Head of caudate nucleus (tissue), 42 donors: ENCODE measurements at regions of chr7 and their contacts with region 1.

Region 1: DNA sequence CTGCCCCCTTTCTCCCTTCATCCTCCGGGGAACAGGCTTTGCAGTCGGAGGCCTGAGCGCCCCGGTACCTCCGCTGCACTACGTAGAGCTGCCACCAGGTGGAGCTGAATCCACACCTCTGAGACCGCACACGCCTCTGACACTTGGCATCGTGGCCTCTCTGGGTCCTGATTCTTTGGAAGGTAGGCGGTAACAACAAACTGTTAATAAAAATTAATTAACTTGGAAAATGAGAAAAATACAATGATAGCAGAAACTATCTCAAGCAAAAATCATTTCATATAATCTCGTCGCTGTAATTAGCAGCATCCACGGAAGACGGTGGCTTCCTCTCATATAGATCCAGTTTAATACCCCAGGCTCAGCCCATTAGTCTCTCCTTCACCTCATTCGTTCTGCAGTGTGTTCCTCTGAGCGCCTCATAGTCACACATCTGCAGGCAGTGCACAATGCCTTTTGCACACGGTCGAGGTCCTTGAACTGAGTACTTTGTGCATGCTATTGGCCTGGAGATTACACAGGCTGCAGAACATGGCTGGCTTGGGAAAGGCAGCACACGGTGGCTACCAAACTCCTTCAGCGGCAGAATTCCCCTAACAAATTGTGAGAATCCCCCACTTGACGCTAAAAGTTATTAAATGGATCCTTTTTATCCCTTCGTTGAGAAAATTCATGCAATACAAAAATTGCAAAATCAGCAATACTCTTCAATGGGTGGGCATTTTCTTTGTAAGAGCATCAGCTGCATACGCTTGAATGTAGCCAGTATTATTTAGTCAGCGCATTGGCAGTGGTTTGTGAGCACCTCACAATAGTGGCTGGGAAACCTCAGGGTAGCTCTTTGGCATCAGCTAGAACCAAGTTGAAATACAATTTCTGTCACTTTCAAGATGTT is 18.7 kb downstream of the OR9A2 start:
- DNase-seq: peak; percentile 53 to 95 (median 87)

Region 2: GRCh38 chr7:142853739-142854371 is 154.4 kb before region 1 on chr7:
- intact Hi-C with region 1: loop called (anchors 10 kb)
- DNase-seq: peak; percentile 60 to 88 (median 73)

Region 3: GRCh38 chr7:142908921-142909890 is 99.0 kb before region 1 on chr7:
- intact Hi-C with region 1: no loop called
- DNase-seq: peak in 11 of 42 donors; percentile 11 to 39 (median 16)

Region 4: GRCh38 chr7:143085109-143085508 is 76.9 kb after region 1 on chr7:
- intact Hi-C with region 1: no loop called
- DNase-seq: no peak